ENCODE measurements at regions of chr15 and their contacts with region 1.

Region 1: GRCh38 chr15:94119923-94120775 is 111.2 kb upstream of the MCTP2 start:
- DNase-seq: peak; percentile 75
- H3K4me3 Mint-ChIP-seq: no peak overlapping the region
- H3K27ac Mint-ChIP-seq: no peak overlapping the region
- H3K4me1 Mint-ChIP-seq: no peaks in the 10 kb centered on the region
- H3K27me3 Mint-ChIP-seq: no peaks in the 10 kb centered on the region

Region 2: GRCh38 chr15:93030430-93031105 is 1089.6 kb before region 1 on chr15:
- CTCF ChIA-PET with region 1: interaction called, 4 read pairs
- intact Hi-C with region 1: loop called (anchors 1 kb)
- DNase-seq: peak; percentile 78
- H3K4me3 Mint-ChIP-seq: no peak overlapping the region
- H3K27ac Mint-ChIP-seq: no peak overlapping the region
- H3K4me1 Mint-ChIP-seq: peaks cover 33% of the 10 kb centered on the region
- H3K27me3 Mint-ChIP-seq: no peaks in the 10 kb centered on the region

Region 3: GRCh38 chr15:93035953-93036800 is 1084.0 kb before region 1 on chr15:
- CTCF ChIA-PET with region 1: interaction called, 4 read pairs
- intact Hi-C with region 1: loop called (anchors 1 kb)
- DNase-seq: peak; percentile 67
- H3K4me3 Mint-ChIP-seq: no peak overlapping the region
- H3K27ac Mint-ChIP-seq: no peak overlapping the region
- H3K4me1 Mint-ChIP-seq: peaks cover 5% of the 10 kb centered on the region
- H3K27me3 Mint-ChIP-seq: no peaks in the 10 kb centered on the region

Region 4: DNA sequence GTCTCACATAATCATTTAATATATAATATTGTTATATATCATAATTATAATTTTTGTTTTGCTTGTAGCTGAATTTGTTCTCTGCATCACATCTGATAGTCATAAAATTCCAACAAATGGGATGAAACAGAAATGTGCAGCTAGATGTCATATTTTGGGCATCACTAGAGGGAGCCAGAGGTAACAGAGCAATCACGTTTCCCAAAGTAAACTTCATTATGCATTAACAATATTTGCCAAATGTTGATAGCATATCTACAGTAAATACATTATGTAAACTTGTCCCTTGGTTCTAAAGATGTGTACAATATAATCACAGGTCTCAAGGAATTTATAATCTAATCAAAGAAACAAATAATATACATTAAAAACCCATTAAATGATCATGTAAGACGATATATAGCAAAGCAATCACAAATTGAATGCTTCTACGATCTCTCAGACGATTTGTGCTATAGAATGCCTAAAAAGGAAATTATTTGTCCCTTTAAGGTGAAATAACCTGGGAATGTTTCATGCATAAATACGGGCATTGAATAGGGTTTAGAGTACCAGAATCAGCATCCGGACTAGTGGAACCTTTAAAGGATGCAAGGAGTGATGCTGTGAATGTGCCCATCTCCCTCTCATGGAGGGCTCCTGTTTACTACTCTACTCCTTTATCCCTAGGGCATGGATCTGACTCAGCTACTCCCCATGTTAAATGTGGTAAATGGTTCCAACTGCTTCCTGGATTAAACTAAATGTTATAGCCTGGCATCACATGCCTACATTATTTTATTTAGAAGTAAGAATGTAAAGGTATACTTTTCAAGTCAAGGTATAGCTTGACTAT is 122.8 kb before region 1 on chr15:
- CTCF ChIA-PET with region 1: interaction called, 3 read pairs
- intact Hi-C with region 1: loop called (anchors 1 kb)
- DNase-seq: no peak
- H3K4me3 Mint-ChIP-seq: no peak overlapping the region
- H3K27ac Mint-ChIP-seq: no peak overlapping the region
- H3K4me1 Mint-ChIP-seq: no peaks in the 10 kb centered on the region
- H3K27me3 Mint-ChIP-seq: no peaks in the 10 kb centered on the region

Region 5: DNA sequence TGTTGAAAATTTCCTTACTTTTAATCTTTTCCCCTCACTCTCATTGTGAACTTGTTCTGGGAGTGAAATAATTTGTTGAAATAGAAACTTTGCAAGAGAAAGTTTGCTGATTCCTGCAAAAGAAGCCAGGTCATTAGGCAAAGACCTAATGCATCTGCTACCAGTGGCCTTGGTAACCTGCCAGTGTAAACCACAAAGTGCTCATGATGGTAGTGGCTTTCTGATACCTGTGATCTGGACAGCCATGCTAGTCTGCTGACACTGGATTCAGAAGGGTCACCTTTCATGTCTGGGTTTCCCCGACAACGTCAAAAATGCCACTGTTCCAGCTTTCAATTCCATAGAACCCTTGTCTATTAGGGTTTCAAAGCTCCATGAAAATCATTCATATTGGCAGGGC is 12.5 kb before region 1 on chr15:
- CTCF ChIA-PET with region 1: interaction called, 15 read pairs
- intact Hi-C with region 1: no loop called
- DNase-seq: no peak
- H3K4me3 Mint-ChIP-seq: no peak overlapping the region
- H3K27ac Mint-ChIP-seq: no peak overlapping the region
- H3K4me1 Mint-ChIP-seq: no peaks in the 10 kb centered on the region
- H3K27me3 Mint-ChIP-seq: peaks cover 17% of the 10 kb centered on the region

Region 6: DNA sequence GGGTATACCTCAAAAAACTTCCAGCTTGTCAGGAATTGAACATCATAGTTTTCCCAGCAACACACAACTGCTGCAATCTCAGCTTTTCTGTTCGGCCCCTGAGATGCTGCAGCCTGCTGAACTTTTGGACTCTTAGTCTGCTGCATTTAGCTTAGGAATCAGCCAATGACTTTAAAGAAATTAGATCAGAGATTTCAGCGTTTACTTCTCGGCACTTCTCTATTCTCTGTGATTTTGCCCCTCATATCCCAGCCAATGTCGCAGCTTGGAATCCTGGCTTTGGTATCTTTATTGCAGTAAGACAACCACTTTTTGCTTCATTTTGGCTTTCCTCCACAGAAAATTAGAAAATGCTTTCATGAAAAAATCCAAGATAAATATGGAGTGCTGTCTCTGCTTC is 24.9 kb after region 1 on chr15:
- CTCF ChIA-PET with region 1: no interaction called
- intact Hi-C with region 1: no loop called
- DNase-seq: no peak
- H3K4me3 Mint-ChIP-seq: no peak overlapping the region
- H3K27ac Mint-ChIP-seq: no peak overlapping the region
- H3K4me1 Mint-ChIP-seq: no peaks in the 10 kb centered on the region
- H3K27me3 Mint-ChIP-seq: peaks cover 17% of the 10 kb centered on the region

Measured in activated naive CD4-positive, alpha-beta T cell treated with anti-CD3 and anti-CD28 coated beads for 36 hours (primary cell).